BJ (cell line): ENCODE measurements at regions of chr6 and their contacts with region 1.

Region 1: DNA sequence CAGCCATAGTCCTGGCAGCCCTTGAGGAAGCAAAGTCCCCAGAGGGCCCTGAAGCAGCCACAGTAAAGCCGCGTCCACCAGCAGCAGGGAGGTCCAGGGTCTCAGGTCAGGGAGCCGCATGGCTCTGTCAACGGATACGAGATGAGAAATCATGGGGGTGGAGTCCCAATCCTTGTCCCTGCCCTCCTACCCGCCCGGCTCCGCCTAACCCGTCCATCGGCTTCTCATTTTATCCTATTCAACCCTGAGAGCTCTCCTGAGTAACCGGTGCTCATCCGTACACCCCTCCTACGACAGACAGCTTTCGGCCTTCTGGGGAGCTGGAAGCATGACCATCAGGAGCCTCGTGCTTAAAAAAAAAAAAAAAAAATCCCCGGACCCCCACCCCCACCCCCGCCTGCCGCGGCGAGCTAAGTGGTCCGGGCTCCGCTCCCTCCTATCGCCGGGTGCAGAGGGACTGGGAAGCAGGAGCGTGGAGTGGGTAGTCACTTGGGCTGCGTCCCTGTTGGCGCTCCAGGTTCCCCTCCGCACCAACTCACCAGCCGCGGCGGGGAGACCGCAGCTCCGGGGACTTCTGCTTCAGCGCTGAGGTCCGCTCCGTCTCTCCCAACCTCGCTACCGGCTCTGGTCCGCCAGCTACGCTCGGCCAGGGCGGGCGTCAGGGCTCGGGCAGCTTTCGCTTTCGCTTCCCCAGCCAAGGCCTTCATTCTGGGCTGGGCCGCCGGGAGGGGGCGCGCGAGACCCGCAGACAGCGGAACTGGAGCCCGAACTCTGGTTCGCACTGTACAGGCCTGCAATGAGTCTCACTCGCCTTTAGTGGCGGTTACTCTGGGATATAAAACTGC is at the start of gene TAP2:
- DNase-seq: peak; percentile 46
- H3K4me3 ChIP-seq: peak within 1 kb of the TSS; percentile 90
- H3K27me3 ChIP-seq: no peaks in the 10 kb centered on the region
- CTCF ChIP-seq: peak; percentile 96
- polyA plus RNA-seq, gene TAP2: 18.0 and 25.4 TPM in 2 replicates

Region 2: DNA sequence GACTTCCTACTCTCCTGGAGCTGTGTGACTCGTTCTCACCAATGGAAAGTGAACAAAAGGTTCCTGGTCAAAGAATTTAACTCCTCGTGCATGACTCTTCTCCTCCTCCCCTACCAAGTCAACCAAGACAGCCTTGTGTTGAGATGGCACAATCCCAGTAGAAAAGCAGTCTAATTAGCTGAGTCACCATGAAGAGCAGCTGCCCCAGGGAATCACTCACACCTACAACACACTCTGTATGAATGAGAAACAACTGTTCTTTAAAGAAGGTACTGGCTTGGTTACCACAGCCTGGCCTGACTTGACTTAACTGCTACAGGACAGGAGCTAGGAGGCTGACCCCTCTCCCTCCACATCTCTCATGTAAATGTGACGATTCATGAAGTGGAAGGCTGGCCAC is 18.6 kb before region 1 on chr6:
- CTCF ChIA-PET with region 1: interaction called, 26 read pairs
- POLR2A ChIA-PET with region 1: no interaction called
- DNase-seq: no peak
- H3K4me3 ChIP-seq: no peak overlapping the region
- H3K27me3 ChIP-seq: no peaks in the 10 kb centered on the region; the same call in 1 of the 2 replicates
- CTCF ChIP-seq: no peak

Region 3: GRCh38 chr6:32853541-32854375 is 15.4 kb after region 1 on chr6 and contains the starts of genes PSMB9 and TAP1:
- CTCF ChIA-PET with region 1: interaction called, 102 read pairs
- POLR2A ChIA-PET with region 1: no interaction called
- DNase-seq: peak; percentile 61
- H3K4me3 ChIP-seq: peak within 1 kb of the TSS; percentile 65
- H3K27me3 ChIP-seq: no peaks in the 10 kb centered on the region
- CTCF ChIP-seq: peak; percentile 72
- polyA plus RNA-seq, gene PSMB9: 37.9 and 44.7 TPM in 2 replicates
- polyA plus RNA-seq, gene TAP1: 58.4 and 80.4 TPM in 2 replicates

Region 4: GRCh38 chr6:32868257-32868788 is 30.0 kb after region 1 on chr6:
- CTCF ChIA-PET with region 1: interaction called, 110 read pairs
- POLR2A ChIA-PET with region 1: interaction called, 4 read pairs
- DNase-seq: no peak
- H3K4me3 ChIP-seq: no peak overlapping the region
- H3K27me3 ChIP-seq: peaks cover 6% of the 10 kb centered on the region
- CTCF ChIP-seq: peak; percentile 87

Region 5: GRCh38 chr6:32971581-32972352 is 133.4 kb after region 1 on chr6:
- CTCF ChIA-PET with region 1: interaction called, 9 read pairs
- POLR2A ChIA-PET with region 1: interaction called, 12 read pairs
- DNase-seq: peak; percentile 99
- H3K4me3 ChIP-seq: peak overlapping the region; percentile 94
- H3K27me3 ChIP-seq: no peaks in the 10 kb centered on the region
- CTCF ChIP-seq: no peak